ENCODE measurements at regions of chr17 and their contacts with region 1.

Region 1: GRCh38 chr17:59707114-59707970 is at the starts of genes PTRH2 and VMP1:
- DNase-seq: peak; percentile 99
- H3K4me3 ChIP-seq: peak within 1 kb of the TSS; percentile 64 to 86 (median 80)
- H3K27ac ChIP-seq: peak within 1 kb of the TSS; percentile 89 to 96 (median 92)
- H3K4me1 ChIP-seq: peaks cover 0 to 49% (median 37%) of the 10 kb centered on the region in 4 donors
- H3K27me3 ChIP-seq: no peaks in the 10 kb centered on the region
- CTCF ChIP-seq: no peak
- EP300 ChIP-seq: peak in 2 of 4 donors; percentile 2 to 63
- POLR2A ChIP-seq: peak; percentile 90 to 92
- total RNA-seq, gene PTRH2: 21.8 to 36.2 (median 24.1) TPM
- total RNA-seq, gene VMP1: 92.7 to 247 (median 139) TPM

Region 2: GRCh38 chr17:59601130-59601529 is 106.2 kb before region 1 on chr17:
- intact Hi-C with region 1: no loop called
- DNase-seq: no peak
- H3K4me3 ChIP-seq: no peak overlapping the region
- H3K27ac ChIP-seq: no peak overlapping the region
- H3K4me1 ChIP-seq: no peaks in the 10 kb centered on the region
- H3K27me3 ChIP-seq: no peaks in the 10 kb centered on the region
- CTCF ChIP-seq: no peak
- EP300 ChIP-seq: no peak
- POLR2A ChIP-seq: no peak

Region 3: GRCh38 chr17:59619293-59620063 is 87.9 kb before region 1 on chr17 and contains the start of gene CLTC:
- intact Hi-C with region 1: loop called (anchors 1 kb)
- DNase-seq: peak; percentile 97
- H3K4me3 ChIP-seq: peak within 1 kb of the TSS; percentile 72 to 85 (median 85)
- H3K27ac ChIP-seq: peak within 1 kb of the TSS; percentile 95 to 98 (median 96)
- H3K4me1 ChIP-seq: peaks cover 0 to 50% (median 45%) of the 10 kb centered on the region in 4 donors
- H3K27me3 ChIP-seq: no peaks in the 10 kb centered on the region
- CTCF ChIP-seq: no peak
- EP300 ChIP-seq: peak; percentile 19 to 66 (median 54)
- POLR2A ChIP-seq: peak; percentile 90 to 93
- total RNA-seq, gene CLTC: 206 to 236 (median 214) TPM

Region 4: DNA sequence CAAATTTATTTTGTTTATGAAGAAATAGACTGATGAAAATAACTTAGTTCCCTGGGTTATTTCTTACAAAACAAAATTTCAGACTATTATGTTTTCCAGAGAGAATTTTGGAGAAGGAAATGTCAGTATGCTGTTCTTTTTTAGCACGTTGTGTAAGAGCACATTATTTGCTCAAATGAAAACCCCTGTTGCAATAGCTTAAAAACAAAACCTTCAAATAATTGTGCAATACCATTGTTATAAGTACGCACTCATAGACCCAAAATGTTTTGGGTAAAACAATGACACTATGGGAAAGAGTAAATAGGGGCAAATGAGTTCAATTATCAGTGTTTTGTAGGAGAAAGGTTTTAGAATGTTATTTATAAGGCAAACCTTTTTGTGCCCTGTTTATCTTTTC is 18.3 kb after region 1 on chr17:
- intact Hi-C with region 1: no loop called
- DNase-seq: no peak
- H3K4me3 ChIP-seq: no peak overlapping the region
- H3K27ac ChIP-seq: peak overlapping the region; percentile 41 to 68 (median 46)
- H3K4me1 ChIP-seq: peaks cover 0 to 32% (median 15%) of the 10 kb centered on the region in 4 donors
- H3K27me3 ChIP-seq: no peaks in the 10 kb centered on the region
- CTCF ChIP-seq: no peak
- EP300 ChIP-seq: peak in 2 of 4 donors; percentile 45 to 79
- POLR2A ChIP-seq: no peak

Region 5: GRCh38 chr17:59769891-59770290 is 62.5 kb after region 1 on chr17:
- intact Hi-C with region 1: no loop called
- DNase-seq: no peak
- H3K4me3 ChIP-seq: no peak overlapping the region
- H3K27ac ChIP-seq: peak overlapping the region in 2 of 4 donors; percentile 20 to 52
- H3K4me1 ChIP-seq: peaks cover 0 to 10% (median 0%) of the 10 kb centered on the region in 4 donors
- H3K27me3 ChIP-seq: no peaks in the 10 kb centered on the region
- CTCF ChIP-seq: no peak
- EP300 ChIP-seq: no peak
- POLR2A ChIP-seq: no peak

Region 6: DNA sequence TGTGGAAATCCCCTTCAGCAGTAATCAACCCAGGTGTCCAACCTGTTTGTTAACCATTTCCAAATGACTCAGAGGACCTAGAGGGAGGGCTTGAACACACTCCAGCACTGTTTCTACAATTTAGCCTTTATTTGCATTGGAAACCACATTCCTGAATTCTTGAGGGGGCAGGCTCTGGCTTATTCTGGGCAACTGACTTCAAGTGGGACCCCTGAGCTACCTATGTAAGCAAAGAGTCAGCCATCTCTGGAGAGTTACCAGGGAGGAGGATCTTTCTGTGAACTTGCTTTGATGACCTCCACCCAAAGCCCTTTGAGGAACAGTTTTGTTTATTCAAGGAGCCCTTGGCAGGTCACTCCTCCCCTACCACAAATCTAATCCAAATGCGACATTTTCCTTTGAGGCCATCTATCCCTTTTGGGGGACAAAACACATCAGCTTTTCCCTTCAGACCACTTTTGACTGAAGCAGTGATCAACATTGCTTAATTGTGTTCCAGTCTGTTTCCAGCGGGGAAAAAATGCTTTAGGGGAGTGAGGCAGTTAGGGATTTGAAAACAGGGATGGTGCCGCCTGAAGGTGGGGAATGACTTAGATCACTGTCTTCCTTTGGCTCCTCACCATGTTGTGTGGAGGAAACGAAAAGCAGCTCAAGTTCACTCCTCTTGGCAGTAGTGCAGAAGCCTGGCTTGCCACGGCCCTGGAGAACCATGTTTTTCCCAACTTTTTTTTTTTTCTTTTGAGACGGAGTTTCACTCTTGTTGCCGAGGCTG is 139.2 kb after region 1 on chr17:
- intact Hi-C with region 1: loop called (anchors 5 kb)
- DNase-seq: peak; percentile 95
- H3K4me3 ChIP-seq: peak overlapping the region in 3 of 4 donors; percentile 1 to 23 (median 14)
- H3K27ac ChIP-seq: peak overlapping the region; percentile 81 to 94 (median 93)
- H3K4me1 ChIP-seq: peaks cover 0 to 64% (median 59%) of the 10 kb centered on the region in 4 donors
- H3K27me3 ChIP-seq: no peaks in the 10 kb centered on the region
- CTCF ChIP-seq: no peak
- EP300 ChIP-seq: no peak
- POLR2A ChIP-seq: no peak